Activated CD4-positive, alpha-beta memory T cell treated with anti-CD3 and anti-CD28 coated beads for 36 hours (primary cell): ENCODE measurements at regions of chr9 and their contacts with region 1.

Region 1: GRCh38 chr9:6681147-6681956 is 35.8 kb upstream of the GLDC start:
- DNase-seq: peak; percentile 95
- H3K4me3 Mint-ChIP-seq: peak overlapping the region; percentile 96
- H3K27ac Mint-ChIP-seq: peak overlapping the region; percentile 100
- H3K4me1 Mint-ChIP-seq: peaks cover 19% of the 10 kb centered on the region
- H3K27me3 Mint-ChIP-seq: no peaks in the 10 kb centered on the region

Region 2: DNA sequence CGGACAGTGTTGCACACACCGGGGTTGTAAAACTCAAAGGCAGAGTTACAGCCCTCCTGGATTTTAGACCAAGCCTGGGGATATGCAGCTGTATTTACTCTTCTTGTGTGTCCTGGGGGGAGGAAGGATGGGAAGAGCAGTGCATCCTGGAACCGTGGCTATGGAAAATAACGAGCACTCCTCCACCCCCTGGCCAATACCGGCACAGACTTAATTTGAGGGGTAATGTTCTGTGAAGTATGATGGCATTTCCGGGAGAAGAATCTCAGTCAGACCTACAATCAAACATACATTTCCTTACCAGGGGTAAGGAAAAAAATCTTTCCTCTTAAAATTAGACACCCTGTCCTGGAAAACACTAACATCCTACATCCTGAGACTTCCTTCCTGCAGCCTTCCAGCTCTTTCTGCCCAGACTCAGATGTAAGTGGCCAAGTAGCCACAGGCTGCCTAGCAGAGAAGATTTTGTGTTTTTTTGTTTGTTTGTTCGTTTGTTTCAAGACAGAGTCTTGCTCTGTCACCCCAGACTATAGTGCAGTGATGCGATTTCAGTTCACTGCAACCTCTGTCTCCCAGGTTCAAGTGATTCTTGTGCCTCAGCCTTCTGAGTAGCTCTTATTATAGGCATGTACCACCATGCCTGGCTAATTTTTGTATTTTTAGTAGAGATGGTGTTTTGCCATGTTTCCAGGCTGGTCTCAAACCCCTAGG is 837.4 kb before region 1 on chr9:
- CTCF ChIA-PET with region 1: no interaction called
- POLR2A ChIA-PET with region 1: no interaction called
- intact Hi-C with region 1: loop called (anchors 5 kb)
- DNase-seq: no peak
- H3K4me3 Mint-ChIP-seq: peak overlapping the region; percentile 46
- H3K27ac Mint-ChIP-seq: peak overlapping the region; percentile 82
- H3K4me1 Mint-ChIP-seq: peaks cover 63% of the 10 kb centered on the region
- H3K27me3 Mint-ChIP-seq: no peaks in the 10 kb centered on the region

Region 3: GRCh38 chr9:6353851-6354686 is 327.3 kb before region 1 on chr9:
- CTCF ChIA-PET with region 1: no interaction called
- POLR2A ChIA-PET with region 1: no interaction called
- intact Hi-C with region 1: loop called (anchors 1 kb)
- DNase-seq: peak; percentile 23
- H3K4me3 Mint-ChIP-seq: no peak overlapping the region
- H3K27ac Mint-ChIP-seq: no peak overlapping the region
- H3K4me1 Mint-ChIP-seq: peaks cover 16% of the 10 kb centered on the region
- H3K27me3 Mint-ChIP-seq: peaks cover 4% of the 10 kb centered on the region

Region 4: DNA sequence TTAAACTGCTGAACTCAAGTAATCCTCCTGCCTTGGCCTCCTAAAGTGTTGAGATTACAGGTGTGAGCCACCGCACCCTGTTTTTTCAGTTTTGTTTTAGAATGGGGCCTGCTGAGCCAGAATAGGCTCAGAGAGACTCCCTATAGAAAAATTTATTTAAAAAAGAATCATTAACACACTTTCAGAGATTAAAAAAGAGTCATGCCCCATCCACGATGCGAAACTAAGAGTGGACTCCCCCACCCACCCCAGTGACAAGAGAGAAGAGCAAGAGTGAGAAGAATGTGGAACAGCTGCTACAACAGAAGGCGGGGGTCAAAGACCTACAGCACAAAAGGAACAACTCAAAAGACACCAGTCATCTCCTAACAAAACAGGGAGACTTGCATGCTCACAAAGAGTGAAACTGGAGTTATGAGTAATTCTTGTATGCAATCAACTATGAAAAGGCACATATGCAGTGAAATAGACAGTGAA is 83.1 kb before region 1 on chr9:
- CTCF ChIA-PET with region 1: no interaction called
- POLR2A ChIA-PET with region 1: interaction called, 4 read pairs
- intact Hi-C with region 1: loop called (anchors 1 kb)
- DNase-seq: peak; percentile 74
- H3K4me3 Mint-ChIP-seq: peak overlapping the region; percentile 47
- H3K27ac Mint-ChIP-seq: peak overlapping the region; percentile 87
- H3K4me1 Mint-ChIP-seq: peaks cover 8% of the 10 kb centered on the region
- H3K27me3 Mint-ChIP-seq: peaks cover 1% of the 10 kb centered on the region

Region 5: DNA sequence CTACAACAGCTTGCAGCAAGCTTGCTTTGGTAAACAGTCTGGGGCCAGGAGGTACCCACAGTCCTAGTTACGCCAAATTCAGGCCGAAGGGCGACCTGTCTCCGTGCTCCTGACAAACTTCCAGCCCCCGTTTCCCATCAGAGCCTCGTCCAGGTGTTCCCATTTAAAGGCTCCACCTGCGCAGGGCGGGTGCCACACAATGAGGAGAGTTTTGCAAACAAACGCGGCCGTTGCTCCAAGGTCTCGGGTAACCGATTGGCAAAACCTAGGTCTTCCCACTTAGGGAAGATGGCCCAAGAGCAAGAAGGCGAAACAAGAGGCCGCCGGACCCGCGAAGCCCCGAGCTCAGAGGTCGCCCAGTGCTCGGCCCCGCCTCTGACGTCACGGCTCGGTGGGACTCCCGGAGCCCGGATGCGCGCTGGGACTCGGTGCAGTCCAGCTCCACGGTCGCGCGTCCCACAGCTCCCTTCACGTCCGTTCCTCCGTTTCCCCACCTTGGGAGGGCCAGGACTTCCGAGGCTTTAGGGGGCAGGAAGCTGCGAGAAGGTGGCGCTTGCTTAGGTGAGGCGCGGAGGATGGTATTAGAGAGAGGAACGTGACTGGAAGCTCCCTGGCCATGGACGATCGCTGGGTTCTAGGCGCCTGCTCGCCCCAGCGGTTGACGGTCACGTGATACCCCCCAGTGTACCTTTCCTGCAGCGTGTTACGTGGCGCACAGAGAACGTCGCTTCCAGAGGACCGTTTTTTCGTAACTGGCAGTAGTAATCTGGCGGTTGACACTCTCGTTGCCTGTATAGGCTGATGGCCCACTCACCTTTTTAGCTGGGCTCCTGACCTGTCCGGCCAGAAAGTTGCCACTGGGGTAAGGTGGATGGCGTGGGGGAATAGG is 34.6 kb after region 1 on chr9:
- CTCF ChIA-PET with region 1: no interaction called
- POLR2A ChIA-PET with region 1: interaction called, 18 read pairs
- intact Hi-C with region 1: loop called (anchors 1 kb)
- DNase-seq: peak; percentile 84
- H3K4me3 Mint-ChIP-seq: peak overlapping the region; percentile 84
- H3K27ac Mint-ChIP-seq: peak overlapping the region; percentile 91
- H3K4me1 Mint-ChIP-seq: peaks cover 5% of the 10 kb centered on the region
- H3K27me3 Mint-ChIP-seq: no peaks in the 10 kb centered on the region